CD4-positive, alpha-beta T cell (primary cell): ENCODE measurements at regions of chr6 and their contacts with region 1.

Region 1: DNA sequence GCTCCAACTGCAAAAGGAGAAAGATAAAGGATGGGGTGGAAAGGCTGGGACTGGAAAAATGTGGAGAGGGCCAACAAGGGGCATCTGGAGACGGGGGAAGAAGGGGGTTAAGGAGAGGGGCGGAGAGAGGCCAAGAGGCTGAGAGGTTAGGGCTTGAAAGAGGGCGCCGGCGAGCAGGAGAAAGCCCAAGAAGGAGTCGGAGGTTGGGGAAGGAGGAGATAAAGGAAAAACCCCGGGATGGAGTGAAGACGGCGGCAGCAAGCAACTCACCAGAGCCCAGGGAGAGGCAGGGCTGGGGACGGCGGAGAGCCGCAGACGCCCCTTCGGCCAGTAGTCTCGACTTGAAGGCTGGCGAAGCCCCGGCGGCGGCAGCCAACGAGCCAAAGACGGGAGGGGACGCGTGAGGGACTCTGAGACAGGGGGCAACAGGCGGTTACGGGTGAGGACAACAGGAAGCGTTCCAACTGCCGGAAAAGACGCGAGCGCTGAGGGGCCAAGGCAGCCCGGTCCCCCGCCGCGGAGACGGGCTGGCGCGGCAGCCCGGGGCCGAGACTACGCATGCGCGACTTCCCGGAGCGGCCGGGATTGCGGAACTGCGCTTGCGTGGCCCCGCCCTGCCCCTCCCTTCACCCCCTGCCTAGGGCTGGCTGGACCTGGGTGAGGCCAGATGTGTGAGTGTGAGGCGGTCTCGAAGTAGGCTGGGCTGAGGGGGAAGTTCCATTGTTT is at the start of gene STK38:
- DNase-seq: peak; percentile 85 to 96 (median 92)
- ATAC-seq: peak; percentile 67
- H3K4me3 ChIP-seq: peak within 1 kb of the TSS; percentile 97
- H3K4me3 Mint-ChIP-seq: peak within 1 kb of the TSS; percentile 98
- H3K27ac ChIP-seq: peak within 1 kb of the TSS; percentile 90 to 98
- H3K27ac Mint-ChIP-seq: peak within 1 kb of the TSS; percentile 96
- H3K4me1 ChIP-seq: peaks cover 42% of the 10 kb centered on the region
- H3K4me1 Mint-ChIP-seq: peaks cover 54% of the 10 kb centered on the region
- H3K27me3 ChIP-seq: no peaks in the 10 kb centered on the region
- H3K27me3 Mint-ChIP-seq: no peaks in the 10 kb centered on the region
- CTCF ChIP-seq: no peak
- total RNA-seq, gene STK38: 47.0 to 48.4 TPM

Region 2: GRCh38 chr6:36241728-36242127 is 305.4 kb before region 1 on chr6:
- CTCF ChIA-PET with region 1: no interaction called
- POLR2A ChIA-PET with region 1: no interaction called
- intact Hi-C with region 1: no loop called
- DNase-seq: peak in 2 of 14 experiments; percentile 23 to 27
- ATAC-seq: no peak
- H3K4me3 ChIP-seq: no peak overlapping the region
- H3K4me3 Mint-ChIP-seq: no peak overlapping the region
- H3K27ac ChIP-seq: no peak overlapping the region
- H3K27ac Mint-ChIP-seq: no peak overlapping the region
- H3K4me1 ChIP-seq: peaks cover 5% of the 10 kb centered on the region
- H3K4me1 Mint-ChIP-seq: peaks cover 17% of the 10 kb centered on the region
- H3K27me3 ChIP-seq: no peaks in the 10 kb centered on the region
- H3K27me3 Mint-ChIP-seq: no peaks in the 10 kb centered on the region
- CTCF ChIP-seq: no peak

Region 3: DNA sequence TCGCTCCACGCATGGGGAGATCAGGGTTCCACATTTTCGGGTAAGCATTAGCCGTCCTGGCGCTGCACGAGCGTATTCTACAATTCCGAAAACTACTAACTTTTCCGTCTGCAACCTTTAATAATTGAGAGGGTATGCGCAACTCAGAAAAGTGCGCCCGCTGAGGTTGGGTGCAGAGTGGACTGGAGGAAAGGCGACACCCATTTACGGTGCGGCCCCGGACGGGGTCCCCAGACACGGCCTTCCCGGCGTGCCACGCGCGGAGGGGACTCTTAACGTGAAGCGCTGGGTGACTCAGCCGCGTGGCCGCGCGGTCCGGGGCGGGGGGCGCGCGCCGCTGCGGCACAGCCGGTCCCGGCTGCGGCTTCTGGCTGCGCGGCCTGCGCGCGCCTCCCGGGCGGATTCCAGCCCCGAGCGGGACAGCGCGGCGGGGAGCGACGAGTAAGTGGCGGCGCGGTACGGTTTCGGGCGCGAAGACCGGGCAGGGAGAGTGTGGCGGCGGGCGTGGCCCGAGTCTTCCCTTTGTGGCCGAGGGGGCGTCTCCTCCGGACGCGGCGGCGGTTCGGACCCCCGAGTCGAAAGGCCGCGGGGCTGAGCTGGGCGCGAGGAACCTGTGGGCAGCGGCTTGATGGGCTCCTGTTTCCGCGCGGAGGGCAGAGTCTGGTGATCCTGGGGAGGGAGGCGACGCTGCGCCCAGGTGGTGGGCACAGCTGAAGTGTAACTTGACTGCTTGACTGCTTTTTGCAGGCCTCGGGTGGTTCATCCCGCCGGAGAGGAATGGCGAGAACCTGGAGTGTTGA is 104.2 kb before region 1 on chr6 and contains the starts of genes KCTD20 and PXT1:
- CTCF ChIA-PET with region 1: interaction called, 3 read pairs
- POLR2A ChIA-PET with region 1: interaction called, 8 read pairs
- intact Hi-C with region 1: loop called (anchors 2 to 5 kb)
- DNase-seq: peak; percentile 69 to 93 (median 80)
- ATAC-seq: peak; percentile 75
- H3K4me3 ChIP-seq: peak within 1 kb of the TSS; percentile 97
- H3K4me3 Mint-ChIP-seq: peak within 1 kb of the TSS; percentile 99
- H3K27ac ChIP-seq: peak within 1 kb of the TSS; percentile 85 to 92
- H3K27ac Mint-ChIP-seq: peak within 1 kb of the TSS; percentile 97
- H3K4me1 ChIP-seq: peaks cover 27% of the 10 kb centered on the region
- H3K4me1 Mint-ChIP-seq: peaks cover 61% of the 10 kb centered on the region
- H3K27me3 ChIP-seq: no peaks in the 10 kb centered on the region
- H3K27me3 Mint-ChIP-seq: no peaks in the 10 kb centered on the region
- CTCF ChIP-seq: no peak
- total RNA-seq, gene KCTD20: 38.4 to 39.5 TPM
- total RNA-seq, gene PXT1: 0.55 to 0.59 TPM

Region 4: DNA sequence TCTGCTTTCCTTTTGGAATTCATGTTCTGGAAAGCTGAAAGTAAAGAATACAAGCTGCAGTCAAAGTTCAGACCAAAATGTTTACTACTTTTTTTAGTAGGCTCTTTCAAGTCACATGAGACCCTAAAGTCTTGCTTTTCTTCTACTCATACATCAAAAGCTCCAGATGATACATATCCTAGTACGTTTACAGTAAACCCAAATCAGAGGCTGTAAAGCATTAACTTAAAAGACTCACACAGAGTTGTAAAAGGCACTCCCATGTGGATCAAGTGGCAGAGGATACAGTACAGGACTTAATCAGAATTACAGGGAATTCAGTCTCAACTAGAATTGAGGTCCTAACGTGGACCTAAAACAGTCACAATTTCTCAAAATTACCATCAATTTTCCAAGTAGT is 40.5 kb before region 1 on chr6:
- CTCF ChIA-PET with region 1: interaction called, 6 read pairs
- POLR2A ChIA-PET with region 1: interaction called, 10 read pairs
- intact Hi-C with region 1: loop called in 1 of 2 experiments (anchors 2 kb)
- DNase-seq: no peak
- ATAC-seq: peak; percentile 74
- H3K4me3 ChIP-seq: no peak overlapping the region
- H3K4me3 Mint-ChIP-seq: peak overlapping the region; percentile 64
- H3K27ac ChIP-seq: peak overlapping the region in 1 of 2 donors; percentile 20
- H3K27ac Mint-ChIP-seq: peak overlapping the region; percentile 86
- H3K4me1 ChIP-seq: peaks cover 21% of the 10 kb centered on the region
- H3K4me1 Mint-ChIP-seq: peaks cover 48% of the 10 kb centered on the region
- H3K27me3 ChIP-seq: no peaks in the 10 kb centered on the region
- H3K27me3 Mint-ChIP-seq: no peaks in the 10 kb centered on the region
- CTCF ChIP-seq: no peak

Region 5: DNA sequence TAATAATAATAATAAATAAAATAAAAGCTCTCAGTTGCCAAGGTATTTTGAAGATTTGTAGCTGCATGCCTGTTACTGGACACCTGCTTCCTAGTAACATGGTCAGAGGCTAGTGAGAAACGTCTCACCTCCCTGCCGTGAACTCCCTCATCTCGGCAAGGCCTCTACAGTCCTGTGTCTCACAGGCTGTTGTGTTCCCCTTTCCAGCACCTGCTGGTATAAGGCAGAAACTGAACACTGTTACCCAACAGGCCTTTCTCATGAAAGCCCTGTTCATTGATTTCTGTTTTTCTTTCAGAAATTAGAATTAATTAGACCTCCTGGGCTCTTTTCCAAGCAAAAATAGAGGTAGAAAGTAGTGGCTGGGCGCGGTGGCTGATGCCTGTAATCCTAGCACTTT is 29.5 kb after region 1 on chr6:
- CTCF ChIA-PET with region 1: interaction called, 3 read pairs
- POLR2A ChIA-PET with region 1: interaction called, 8 read pairs
- intact Hi-C with region 1: loop called in 1 of 2 experiments (anchors 2 kb)
- DNase-seq: no peak
- ATAC-seq: no peak
- H3K4me3 ChIP-seq: no peak overlapping the region
- H3K4me3 Mint-ChIP-seq: no peak overlapping the region
- H3K27ac ChIP-seq: no peak overlapping the region
- H3K27ac Mint-ChIP-seq: no peak overlapping the region
- H3K4me1 ChIP-seq: peaks cover 2% of the 10 kb centered on the region
- H3K4me1 Mint-ChIP-seq: peaks cover 9% of the 10 kb centered on the region
- H3K27me3 ChIP-seq: no peaks in the 10 kb centered on the region
- H3K27me3 Mint-ChIP-seq: no peaks in the 10 kb centered on the region
- CTCF ChIP-seq: no peak

Region 6: GRCh38 chr6:36594029-36594815 is 47.1 kb after region 1 on chr6 and contains the start of gene SRSF3:
- CTCF ChIA-PET with region 1: interaction called, 4 read pairs
- POLR2A ChIA-PET with region 1: interaction called, 161 read pairs
- intact Hi-C with region 1: loop called (anchors 2 kb)
- DNase-seq: peak; percentile 89 to 99 (median 94)
- ATAC-seq: peak; percentile 87
- H3K4me3 ChIP-seq: peak within 1 kb of the TSS; percentile 95
- H3K4me3 Mint-ChIP-seq: peak within 1 kb of the TSS; percentile 94
- H3K27ac ChIP-seq: peak within 1 kb of the TSS; percentile 97 to 99
- H3K27ac Mint-ChIP-seq: peak within 1 kb of the TSS; percentile 97
- H3K4me1 ChIP-seq: peaks cover 47% of the 10 kb centered on the region
- H3K4me1 Mint-ChIP-seq: peaks cover 54% of the 10 kb centered on the region
- H3K27me3 ChIP-seq: no peaks in the 10 kb centered on the region
- H3K27me3 Mint-ChIP-seq: peaks cover 5% of the 10 kb centered on the region
- CTCF ChIP-seq: peak; percentile 52
- total RNA-seq, gene SRSF3: 550 to 556 TPM

Region 7: DNA sequence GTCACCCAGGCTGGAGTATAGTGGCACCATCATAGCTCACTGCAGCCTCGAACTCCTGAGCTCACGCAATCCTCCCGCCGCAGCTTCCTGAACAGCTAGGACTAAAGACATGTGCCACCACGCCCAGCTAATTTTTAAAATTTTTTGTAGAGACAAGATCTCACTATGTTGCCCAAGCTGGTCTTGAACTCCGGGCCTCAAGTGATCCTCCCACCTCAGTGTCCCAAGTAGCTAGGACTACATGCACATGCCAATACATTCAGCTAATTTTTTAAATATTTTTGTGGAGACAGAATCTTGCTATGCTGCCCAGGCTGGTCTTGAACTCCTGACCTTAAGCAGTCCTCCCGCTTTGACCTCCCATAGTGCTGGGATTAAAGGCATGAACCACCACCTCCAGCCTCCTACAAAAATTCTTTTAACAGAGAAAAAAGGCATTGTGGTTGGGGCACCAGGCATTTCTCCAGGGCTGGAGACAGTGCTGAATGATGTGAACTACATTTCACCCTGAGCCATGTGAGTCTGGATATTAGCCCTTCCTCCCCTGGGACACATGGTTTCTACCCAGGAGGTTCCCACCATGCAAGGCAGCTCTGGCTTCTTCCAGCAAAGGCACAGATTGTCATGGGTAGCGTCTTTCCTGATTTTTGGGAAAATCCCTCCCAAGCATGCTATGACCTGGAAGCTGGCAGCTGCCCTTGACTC is 849.5 kb after region 1 on chr6:
- CTCF ChIA-PET with region 1: no interaction called
- POLR2A ChIA-PET with region 1: no interaction called
- intact Hi-C with region 1: no loop called
- DNase-seq: no peak
- ATAC-seq: no peak
- H3K4me3 ChIP-seq: no peak overlapping the region
- H3K4me3 Mint-ChIP-seq: no peak overlapping the region
- H3K27ac ChIP-seq: no peak overlapping the region
- H3K27ac Mint-ChIP-seq: no peak overlapping the region
- H3K4me1 ChIP-seq: no peaks in the 10 kb centered on the region
- H3K4me1 Mint-ChIP-seq: no peaks in the 10 kb centered on the region
- H3K27me3 ChIP-seq: no peaks in the 10 kb centered on the region
- H3K27me3 Mint-ChIP-seq: no peaks in the 10 kb centered on the region
- CTCF ChIP-seq: no peak

Region 8: DNA sequence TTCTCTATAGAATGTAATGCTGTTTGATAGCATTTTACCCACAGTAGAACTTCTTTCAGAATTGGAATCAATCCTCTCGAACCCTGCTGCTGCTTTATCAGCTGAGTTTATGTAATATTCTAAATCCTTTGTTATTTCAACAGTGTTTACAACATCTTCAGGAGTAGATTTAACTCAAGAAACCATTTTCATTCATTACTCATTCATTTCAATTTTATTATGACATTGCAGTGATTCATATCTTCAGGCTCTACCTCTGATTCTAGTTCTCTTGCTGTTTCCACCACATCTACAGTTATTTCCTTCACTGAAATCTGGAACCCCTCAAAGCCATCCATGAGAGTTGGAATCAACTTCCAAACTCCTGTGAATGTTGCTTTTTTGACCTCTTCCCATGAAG is 1366.1 kb after region 1 on chr6:
- CTCF ChIA-PET with region 1: no interaction called
- POLR2A ChIA-PET with region 1: no interaction called
- intact Hi-C with region 1: no loop called
- DNase-seq: no peak
- ATAC-seq: no peak
- H3K4me3 ChIP-seq: no peak overlapping the region
- H3K4me3 Mint-ChIP-seq: no peak overlapping the region
- H3K27ac ChIP-seq: no peak overlapping the region
- H3K27ac Mint-ChIP-seq: no peak overlapping the region
- H3K4me1 ChIP-seq: peaks cover 10% of the 10 kb centered on the region
- H3K4me1 Mint-ChIP-seq: peaks cover 76% of the 10 kb centered on the region
- H3K27me3 ChIP-seq: no peaks in the 10 kb centered on the region
- H3K27me3 Mint-ChIP-seq: no peaks in the 10 kb centered on the region
- CTCF ChIP-seq: no peak